ENCODE measurements at regions of chr6 and their contacts with region 1.

Region 1: DNA sequence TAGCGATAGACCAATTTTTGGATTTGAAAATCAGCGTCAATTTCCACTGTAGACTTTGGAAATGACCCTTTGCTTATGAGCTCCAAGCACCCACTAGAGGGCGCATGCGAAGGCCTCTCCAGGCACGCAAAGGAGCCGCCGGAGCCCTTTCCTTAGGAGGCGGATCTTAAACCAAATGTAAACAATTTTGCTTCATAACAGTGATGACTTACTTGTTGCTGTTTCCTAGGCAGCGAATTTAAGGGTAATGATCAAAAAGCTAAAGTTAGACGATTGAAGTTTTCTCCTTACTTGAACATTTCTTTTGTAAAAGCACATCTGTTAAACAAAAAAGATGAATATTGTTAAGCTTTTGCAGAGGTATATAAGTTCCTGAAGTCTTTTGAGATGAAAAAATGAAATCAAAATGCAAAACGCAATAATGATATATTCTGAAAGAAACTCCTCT is 29.2 kb upstream of the EXOC2 start:
- DNase-seq: peak; percentile 65 to 81
- ATAC-seq: peak in 3 of 4 donors; percentile 54 to 82 (median 55)
- H3K4me3 ChIP-seq: no peak overlapping the region
- H3K27ac ChIP-seq: no peak overlapping the region
- H3K4me1 ChIP-seq: no peaks in the 10 kb centered on the region
- H3K27me3 ChIP-seq: no peaks in the 10 kb centered on the region
- CTCF ChIP-seq: peak; percentile 90

Region 2: DNA sequence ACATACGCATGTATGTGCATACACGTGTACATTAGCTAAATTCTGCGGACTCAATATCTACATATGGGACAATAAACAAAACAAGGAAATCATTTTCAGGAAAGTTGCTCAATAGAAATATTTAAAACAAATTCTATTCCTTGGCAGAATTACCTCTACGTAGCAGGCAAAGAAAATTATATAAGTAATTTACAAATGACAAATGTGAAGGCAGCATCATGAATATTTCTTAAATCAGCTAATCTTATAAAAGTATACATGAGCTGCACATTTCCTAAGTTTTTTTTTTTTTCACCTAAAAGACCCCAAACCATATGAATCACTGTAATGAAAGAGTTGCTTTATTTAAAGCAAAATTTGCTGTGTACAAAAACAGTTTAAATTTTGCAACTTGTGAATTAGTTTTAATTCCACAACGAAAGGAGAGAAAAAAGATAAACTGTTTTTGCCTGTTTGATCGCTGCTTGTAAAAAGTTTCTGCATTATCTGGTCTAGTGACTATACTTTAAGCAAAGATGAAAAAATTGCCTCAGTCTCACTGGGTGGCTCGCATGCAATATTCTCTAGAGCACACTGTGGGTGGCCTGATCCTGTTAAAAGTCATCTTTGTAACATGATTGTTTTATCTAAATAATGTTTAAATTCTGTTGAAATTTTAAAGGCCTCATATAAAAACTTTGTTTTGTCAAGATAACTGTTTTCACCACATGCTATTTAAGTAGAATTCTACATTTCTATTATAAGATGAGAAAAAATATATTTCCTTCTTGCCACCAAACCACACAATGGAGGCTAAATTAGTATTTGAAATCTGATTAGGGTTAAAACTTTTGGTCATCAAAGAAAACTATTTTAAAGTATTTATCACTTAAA is 122.3 kb before region 1 on chr6:
- intact Hi-C with region 1: loop called in 1 of 2 experiments (anchors 5 kb)
- DNase-seq: no peak
- ATAC-seq: no peak
- H3K4me3 ChIP-seq: no peak overlapping the region
- H3K27ac ChIP-seq: no peak overlapping the region
- H3K4me1 ChIP-seq: no peaks in the 10 kb centered on the region
- H3K27me3 ChIP-seq: no peaks in the 10 kb centered on the region
- CTCF ChIP-seq: no peak

Region 3: GRCh38 chr6:835476-836160 is 113.5 kb after region 1 on chr6:
- intact Hi-C with region 1: no loop called
- DNase-seq: peak in 1 of 2 donors; percentile 67
- ATAC-seq: peak; percentile 82 to 91 (median 88)
- H3K4me3 ChIP-seq: peak overlapping the region; percentile 10
- H3K27ac ChIP-seq: peak overlapping the region; percentile 84
- H3K4me1 ChIP-seq: peaks cover 24% of the 10 kb centered on the region
- H3K27me3 ChIP-seq: no peaks in the 10 kb centered on the region
- CTCF ChIP-seq: no peak

Region 4: GRCh38 chr6:1436334-1437306 is 714.5 kb after region 1 on chr6:
- intact Hi-C with region 1: loop called in 1 of 2 experiments (anchors 10 kb)
- DNase-seq: no peak
- ATAC-seq: peak; percentile 61 to 86 (median 70)
- H3K4me3 ChIP-seq: no peak overlapping the region
- H3K27ac ChIP-seq: no peak overlapping the region
- H3K4me1 ChIP-seq: no peaks in the 10 kb centered on the region
- H3K27me3 ChIP-seq: peaks cover 0 to 20% (median 0%) of the 10 kb centered on the region in 3 donors
- CTCF ChIP-seq: peak; percentile 79

Region 5: DNA sequence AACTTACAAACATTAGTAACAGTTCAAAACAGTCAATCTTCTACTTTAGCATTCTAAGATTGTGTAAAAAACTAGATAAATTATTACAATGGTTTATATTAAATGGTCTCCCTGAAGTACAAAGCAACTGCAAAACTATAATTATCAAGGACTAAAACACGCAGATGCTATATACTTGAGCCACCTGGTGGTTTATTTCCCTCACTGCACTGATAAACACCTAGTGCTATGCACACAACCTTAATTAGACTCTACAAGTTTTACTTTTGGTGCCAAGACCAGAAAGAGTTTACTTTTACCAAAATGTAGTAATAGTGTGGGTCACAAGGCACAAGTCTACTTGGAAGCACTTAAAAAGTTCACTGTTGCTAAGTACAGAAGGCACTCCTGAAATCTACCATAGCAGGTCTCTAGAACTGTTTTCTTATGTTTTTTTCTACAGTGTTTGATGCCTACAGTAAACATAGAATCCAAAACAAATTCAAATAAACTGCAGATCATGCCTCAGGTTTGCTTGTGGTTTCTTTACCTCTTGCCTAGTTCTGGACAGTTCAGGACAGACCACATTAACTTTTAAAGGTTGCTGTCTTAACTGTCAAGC is 1474.1 kb after region 1 on chr6:
- intact Hi-C with region 1: no loop called
- DNase-seq: no peak
- ATAC-seq: peak; percentile 56 to 88 (median 64)
- H3K4me3 ChIP-seq: no peak overlapping the region
- H3K27ac ChIP-seq: no peak overlapping the region
- H3K4me1 ChIP-seq: no peaks in the 10 kb centered on the region
- H3K27me3 ChIP-seq: peaks cover 0 to 3% (median 0%) of the 10 kb centered on the region in 3 donors
- CTCF ChIP-seq: peak; percentile 85

Measured in psoas muscle (tissue), 8 donors.